ENCODE measurements at regions of chr5 and their contacts with region 1.

Region 1: DNA sequence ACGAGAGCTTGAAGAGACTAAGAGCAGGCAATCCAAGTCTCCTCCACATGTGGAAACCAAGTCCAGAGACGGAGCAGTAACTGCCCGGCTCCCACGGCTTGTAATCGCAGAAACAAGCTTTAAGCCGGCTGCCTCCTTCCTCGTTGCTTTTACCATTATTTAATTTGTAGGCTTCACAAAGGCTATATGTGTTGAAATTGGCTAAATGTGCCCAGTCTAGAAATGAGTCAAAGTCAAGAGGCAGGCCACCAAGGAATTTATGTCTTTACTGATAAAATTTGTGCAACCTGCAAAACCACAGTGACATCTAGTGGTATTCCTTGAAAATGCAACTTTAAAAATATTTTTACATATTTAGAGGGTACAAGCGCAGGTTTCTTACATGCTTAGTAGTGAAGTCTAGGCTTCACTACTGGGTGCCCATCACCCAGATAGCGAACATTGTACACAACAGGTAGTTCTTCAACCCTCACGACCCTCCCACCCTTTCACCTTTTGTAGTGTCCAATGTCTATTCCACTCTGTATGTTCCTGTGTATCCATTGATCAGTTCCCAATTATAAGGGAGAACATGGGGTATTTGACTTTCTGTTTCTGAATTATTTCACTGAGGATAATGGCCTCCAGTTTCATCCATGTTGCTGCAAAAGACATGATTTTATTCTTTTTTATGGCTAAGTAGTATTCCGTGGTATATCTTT is 33.5 kb upstream of the EBF1 start:
- DNase-seq: peak in 4 of 5 donors; percentile 43 to 52 (median 46)
- H3K4me3 ChIP-seq: no peak overlapping the region
- H3K4me3 Mint-ChIP-seq: no peak overlapping the region
- H3K27ac ChIP-seq: no peak overlapping the region
- H3K27ac Mint-ChIP-seq: no peak overlapping the region
- H3K4me1 ChIP-seq: no peaks in the 10 kb centered on the region
- H3K4me1 Mint-ChIP-seq: no peaks in the 10 kb centered on the region
- H3K27me3 ChIP-seq: peaks cover 3% of the 10 kb centered on the region
- H3K27me3 Mint-ChIP-seq: peaks cover 11 to 18% of the 10 kb centered on the region in 2 donors

Region 2: DNA sequence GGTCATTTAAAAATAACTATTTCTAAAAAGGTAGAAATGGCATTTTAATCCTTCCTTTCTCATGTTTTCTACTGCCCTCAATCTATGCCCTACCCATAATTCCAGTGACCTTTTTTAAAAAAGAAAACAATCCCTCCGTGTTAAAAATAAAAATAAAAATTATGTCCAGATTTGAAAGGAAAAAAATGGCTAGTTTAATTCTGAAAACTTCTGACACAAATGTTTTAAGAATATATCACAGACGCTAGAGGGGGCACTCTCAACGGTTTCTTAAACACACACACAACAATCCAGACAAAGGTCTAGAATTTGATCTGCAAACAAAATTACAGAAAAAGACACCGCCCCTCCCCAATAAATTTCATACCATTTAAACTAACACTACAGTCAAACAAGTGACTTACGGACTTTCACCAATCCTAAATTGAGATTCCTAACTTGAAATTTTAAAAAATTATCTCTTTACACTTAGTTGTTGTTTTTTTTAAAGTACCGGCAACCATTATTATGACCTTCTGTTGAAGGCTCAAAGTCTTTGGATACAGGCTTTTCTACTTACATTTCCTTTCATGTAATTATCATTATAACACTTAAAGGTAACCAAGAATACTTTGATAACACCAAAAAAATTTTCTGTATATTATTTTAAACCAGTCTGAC is 1312.5 kb before region 1 on chr5:
- CTCF ChIA-PET with region 1: interaction called, 3 read pairs
- POLR2A ChIA-PET with region 1: no interaction called
- intact Hi-C with region 1: loop called (anchors 1 kb)
- DNase-seq: peak in 4 of 5 donors; percentile 23 to 28 (median 27)
- H3K4me3 ChIP-seq: no peak overlapping the region
- H3K4me3 Mint-ChIP-seq: peak overlapping the region in 1 of 8 donors; percentile 28
- H3K27ac ChIP-seq: no peak overlapping the region
- H3K27ac Mint-ChIP-seq: peak overlapping the region in 5 of 7 donors; percentile 14 to 73 (median 61)
- H3K4me1 ChIP-seq: peaks cover 9% of the 10 kb centered on the region
- H3K4me1 Mint-ChIP-seq: peaks cover 23 to 41% (median 33%) of the 10 kb centered on the region in 4 donors
- H3K27me3 ChIP-seq: no peaks in the 10 kb centered on the region
- H3K27me3 Mint-ChIP-seq: no peaks in the 10 kb centered on the region

Region 3: GRCh38 chr5:158074992-158075769 is 1058.0 kb before region 1 on chr5:
- CTCF ChIA-PET with region 1: interaction called, 23 read pairs
- POLR2A ChIA-PET with region 1: no interaction called
- intact Hi-C with region 1: no loop called
- DNase-seq: peak in 4 of 5 donors; percentile 41 to 47 (median 46)
- H3K4me3 ChIP-seq: no peak overlapping the region
- H3K4me3 Mint-ChIP-seq: peak overlapping the region in 1 of 8 donors; percentile 29
- H3K27ac ChIP-seq: no peak overlapping the region
- H3K27ac Mint-ChIP-seq: peak overlapping the region in 4 of 7 donors; percentile 1 to 78 (median 44)
- H3K4me1 ChIP-seq: peaks cover 4% of the 10 kb centered on the region
- H3K4me1 Mint-ChIP-seq: peaks cover 0 to 5% (median 4%) of the 10 kb centered on the region in 4 donors
- H3K27me3 ChIP-seq: no peaks in the 10 kb centered on the region
- H3K27me3 Mint-ChIP-seq: peaks cover 0 to 7% of the 10 kb centered on the region in 2 donors

Region 4: DNA sequence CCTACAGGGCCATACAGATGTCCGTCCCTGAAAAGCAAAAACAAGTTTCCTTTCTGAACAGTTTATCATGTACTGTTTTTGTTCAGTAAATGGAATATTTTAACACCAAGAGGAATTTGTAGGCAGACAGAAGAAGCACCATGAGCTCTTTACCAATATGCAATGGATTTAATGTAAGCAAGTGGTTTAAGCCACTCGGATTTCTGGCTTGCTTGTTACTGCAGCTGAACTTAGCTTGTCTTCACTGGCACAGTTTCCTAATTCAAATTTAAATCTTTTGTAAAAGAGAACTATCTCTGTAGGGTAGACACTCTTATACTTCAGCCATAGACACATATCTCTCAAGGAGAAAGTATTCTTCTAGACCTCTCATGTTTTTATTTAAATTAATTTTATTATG is 20.8 kb before region 1 on chr5:
- CTCF ChIA-PET with region 1: interaction called, 51 read pairs
- POLR2A ChIA-PET with region 1: no interaction called
- intact Hi-C with region 1: loop called (anchors 1 kb)
- DNase-seq: no peak
- H3K4me3 ChIP-seq: no peak overlapping the region
- H3K4me3 Mint-ChIP-seq: no peak overlapping the region
- H3K27ac ChIP-seq: no peak overlapping the region
- H3K27ac Mint-ChIP-seq: no peak overlapping the region
- H3K4me1 ChIP-seq: no peaks in the 10 kb centered on the region
- H3K4me1 Mint-ChIP-seq: no peaks in the 10 kb centered on the region
- H3K27me3 ChIP-seq: peaks cover 16% of the 10 kb centered on the region
- H3K27me3 Mint-ChIP-seq: peaks cover 15 to 20% of the 10 kb centered on the region in 2 donors

Region 5: GRCh38 chr5:159120446-159120845 is 12.7 kb before region 1 on chr5:
- CTCF ChIA-PET with region 1: interaction called, 18 read pairs
- POLR2A ChIA-PET with region 1: interaction called, 4 read pairs
- intact Hi-C with region 1: no loop called
- DNase-seq: peak in 4 of 5 donors; percentile 52 to 68 (median 60)
- H3K4me3 ChIP-seq: peak overlapping the region in 1 of 2 donors; percentile 29
- H3K4me3 Mint-ChIP-seq: peak overlapping the region; percentile 61 to 89 (median 77)
- H3K27ac ChIP-seq: peak overlapping the region; percentile 30
- H3K27ac Mint-ChIP-seq: peak overlapping the region; percentile 75 to 96 (median 90)
- H3K4me1 ChIP-seq: peaks cover 16% of the 10 kb centered on the region
- H3K4me1 Mint-ChIP-seq: peaks cover 16 to 23% (median 20%) of the 10 kb centered on the region in 4 donors
- H3K27me3 ChIP-seq: no peaks in the 10 kb centered on the region
- H3K27me3 Mint-ChIP-seq: no peaks in the 10 kb centered on the region

Region 6: GRCh38 chr5:159146839-159147238 is 13.6 kb after region 1 on chr5:
- CTCF ChIA-PET with region 1: interaction called, 10 read pairs
- POLR2A ChIA-PET with region 1: no interaction called
- intact Hi-C with region 1: no loop called
- DNase-seq: no peak
- H3K4me3 ChIP-seq: no peak overlapping the region
- H3K4me3 Mint-ChIP-seq: no peak overlapping the region
- H3K27ac ChIP-seq: no peak overlapping the region
- H3K27ac Mint-ChIP-seq: no peak overlapping the region
- H3K4me1 ChIP-seq: no peaks in the 10 kb centered on the region
- H3K4me1 Mint-ChIP-seq: no peaks in the 10 kb centered on the region
- H3K27me3 ChIP-seq: no peaks in the 10 kb centered on the region
- H3K27me3 Mint-ChIP-seq: peaks cover 16 to 24% of the 10 kb centered on the region in 2 donors

Measured in CD4-positive, alpha-beta memory T cell (primary cell).